Posterior vena cava (tissue), 2 donors: ENCODE measurements at regions of chr17 and their contacts with region 1.

Region 1: DNA sequence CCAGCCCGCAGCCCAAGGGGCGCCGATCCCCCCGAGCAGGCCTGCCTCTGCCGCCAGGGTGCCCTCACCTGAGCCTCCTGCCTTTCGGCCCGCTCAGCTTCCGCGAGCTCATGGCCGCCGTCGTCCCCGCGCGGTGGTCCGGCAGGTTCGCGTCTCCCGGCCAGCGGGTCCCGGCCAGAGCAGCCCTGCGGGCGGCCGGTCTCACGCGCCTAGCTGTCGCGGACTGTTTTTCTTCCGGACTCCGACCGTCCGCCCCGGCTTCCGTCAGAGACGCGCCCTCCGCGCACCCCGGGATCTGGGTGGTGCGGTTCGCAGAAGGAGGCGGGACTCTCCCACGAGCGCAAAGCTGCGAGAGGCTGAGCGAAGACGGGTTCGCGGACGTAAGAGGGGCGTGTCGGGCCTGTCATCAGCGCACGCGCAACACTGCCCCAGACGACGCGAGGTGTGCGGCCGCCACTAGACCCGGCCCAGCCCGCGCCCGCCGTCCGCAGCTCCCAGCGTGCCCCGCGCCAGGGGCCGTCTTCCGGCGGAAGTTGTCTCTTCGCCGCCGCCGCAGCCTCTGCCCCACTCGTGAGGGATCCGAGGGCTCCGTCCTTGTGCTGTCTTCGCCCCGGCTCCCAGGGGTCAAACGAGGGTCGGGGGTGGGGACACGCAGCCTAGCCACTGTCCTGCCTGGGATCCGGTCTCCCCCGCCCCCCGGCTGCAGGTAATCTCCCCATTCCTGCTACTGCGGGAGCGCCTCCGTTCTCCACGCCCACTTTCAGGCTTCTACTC is at the start of gene INPP5K:
- DNase-seq: peak; percentile 100
- total RNA-seq, gene INPP5K: 23.5 to 25.2 TPM

Region 2: DNA sequence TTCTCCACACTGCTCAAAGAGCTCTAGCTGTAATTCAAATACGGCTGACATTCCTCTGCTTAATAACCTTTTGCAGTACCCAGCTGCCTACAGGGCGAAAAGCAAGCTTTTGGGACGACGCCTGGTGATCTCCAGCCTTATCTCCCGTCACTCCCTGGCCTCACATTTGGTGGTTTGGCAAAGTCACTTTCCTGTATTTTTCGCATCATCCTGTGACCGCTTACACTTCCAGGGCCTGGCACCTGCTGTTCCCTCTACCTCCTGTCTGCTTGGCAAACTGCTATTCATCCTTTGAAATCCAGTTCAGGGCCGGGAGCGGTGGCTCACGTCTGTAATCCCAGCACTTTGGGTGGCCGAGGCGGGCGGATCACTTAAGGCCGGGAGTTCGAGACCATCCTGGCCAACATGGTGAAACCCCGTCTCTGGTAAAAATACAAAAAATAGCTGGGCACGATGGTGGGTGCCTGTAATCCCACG is 249.1 kb before region 1 on chr17:
- intact Hi-C with region 1: loop called in 1 of 2 experiments (anchors 5 kb)
- DNase-seq: peak; percentile 83

Region 3: GRCh38 chr17:1455797-1456599 is 60.6 kb before region 1 on chr17 and contains the start of gene CRK:
- intact Hi-C with region 1: loop called (anchors 5 to 10 kb)
- DNase-seq: peak; percentile 99
- total RNA-seq, gene CRK: 56.6 to 58.0 TPM

Region 4: GRCh38 chr17:1473170-1473569 is 43.4 kb before region 1 on chr17:
- intact Hi-C with region 1: loop called in 1 of 2 experiments (anchors 1 kb)
- DNase-seq: no peak